ENCODE measurements at regions of chr10 and their contacts with region 1.

Region 1: GRCh38 chr10:3239066-3239919 is 66.7 kb upstream of the PITRM1 start:
- DNase-seq: peak; percentile 66
- ATAC-seq: peak; percentile 85
- H3K4me3 Mint-ChIP-seq: no peak overlapping the region
- H3K27ac Mint-ChIP-seq: no peak overlapping the region
- H3K4me1 Mint-ChIP-seq: peaks cover 5% of the 10 kb centered on the region
- H3K27me3 Mint-ChIP-seq: peaks cover 6% of the 10 kb centered on the region
- CTCF ChIP-seq: no peak

Region 2: DNA sequence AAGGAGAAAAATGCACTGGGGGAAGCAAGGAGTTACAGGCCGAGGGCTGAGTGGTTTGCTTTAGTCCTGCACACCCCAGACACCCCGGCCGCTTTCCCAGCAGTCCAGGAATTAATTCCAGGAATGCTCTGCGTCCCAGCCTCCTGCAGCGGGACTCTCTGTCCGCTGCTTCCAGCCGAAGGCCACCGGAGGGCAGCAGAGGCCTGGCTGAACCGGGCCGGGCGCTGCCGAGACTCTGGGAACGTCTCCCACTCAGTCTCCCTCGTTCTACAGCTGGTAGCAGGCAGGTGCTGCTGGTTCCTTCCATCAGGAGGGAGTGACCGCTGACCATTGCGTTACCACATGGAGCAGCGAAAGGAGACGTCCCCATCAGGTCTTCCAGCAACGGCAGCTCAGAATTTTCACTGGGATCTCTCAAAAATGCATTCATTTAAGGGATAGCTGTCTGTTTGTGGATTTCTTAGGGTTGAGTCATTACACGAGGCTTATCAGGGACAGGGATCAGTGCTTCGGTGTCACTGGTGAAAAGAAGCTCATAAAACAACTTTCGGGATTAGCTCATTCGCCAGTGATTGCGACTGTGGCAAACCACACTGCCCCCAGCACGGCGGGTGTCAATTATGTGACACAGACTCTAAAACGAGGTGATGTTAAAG is 41.8 kb before region 1 on chr10:
- CTCF ChIA-PET with region 1: interaction called, 4 read pairs
- POLR2A ChIA-PET with region 1: no interaction called
- intact Hi-C with region 1: loop called (anchors 5 kb)
- DNase-seq: peak; percentile 27
- ATAC-seq: no peak
- H3K4me3 Mint-ChIP-seq: no peak overlapping the region
- H3K27ac Mint-ChIP-seq: no peak overlapping the region
- H3K4me1 Mint-ChIP-seq: peaks cover 7% of the 10 kb centered on the region
- H3K27me3 Mint-ChIP-seq: peaks cover 35% of the 10 kb centered on the region
- CTCF ChIP-seq: peak; percentile 17